ENCODE measurements at regions of chr21 and their contacts with region 1.

Region 1: GRCh38 chr21:44817506-44817880 is 369 bp downstream of the SUMO3 start:
- DNase-seq: peak; percentile 92
- H3K4me3 Mint-ChIP-seq: peak overlapping the region; percentile 66
- H3K27ac Mint-ChIP-seq: no peak overlapping the region
- H3K4me1 Mint-ChIP-seq: peaks cover 11% of the 10 kb centered on the region
- H3K27me3 Mint-ChIP-seq: no peaks in the 10 kb centered on the region

Region 2: DNA sequence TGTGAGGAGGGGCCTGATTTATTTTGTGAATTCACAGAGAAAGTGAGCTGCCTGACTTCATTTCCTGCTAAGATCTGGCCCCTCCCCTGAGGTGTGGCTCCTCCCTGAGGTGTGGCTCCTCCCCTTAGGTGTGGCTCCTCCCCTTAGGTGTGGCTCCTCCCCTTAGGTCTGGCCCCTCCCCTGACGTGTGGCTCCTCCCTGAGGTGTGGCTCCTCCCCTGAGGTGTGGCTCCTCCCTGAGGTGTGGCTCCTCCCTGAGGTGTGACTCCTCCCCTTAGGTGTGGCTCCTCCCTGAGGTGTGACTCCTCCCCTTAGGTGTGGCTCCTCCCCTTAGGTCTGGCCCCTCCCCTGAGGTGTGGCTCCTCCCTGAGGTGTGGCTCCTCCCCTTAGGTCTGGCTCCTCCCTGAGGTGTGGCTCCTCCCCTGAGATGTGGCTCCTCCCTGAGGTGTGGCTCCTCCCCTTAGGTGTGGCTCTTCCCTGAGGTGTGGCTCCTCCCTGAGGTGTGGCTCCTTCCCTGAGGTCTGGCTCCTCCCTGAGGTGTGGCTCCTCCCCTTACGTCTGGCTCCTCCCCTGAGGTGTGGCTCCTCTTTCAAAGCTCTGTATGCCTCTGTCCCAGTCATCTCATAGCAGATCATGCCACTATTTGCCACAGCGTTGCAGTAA is 389.1 kb before region 1 on chr21:
- intact Hi-C with region 1: loop called (anchors 5 kb)
- DNase-seq: peak; percentile 49
- H3K4me3 Mint-ChIP-seq: no peak overlapping the region
- H3K27ac Mint-ChIP-seq: no peak overlapping the region
- H3K4me1 Mint-ChIP-seq: no peaks in the 10 kb centered on the region
- H3K27me3 Mint-ChIP-seq: no peaks in the 10 kb centered on the region

Region 3: GRCh38 chr21:44454747-44455523 is 362.6 kb before region 1 on chr21 and contains the start of gene LRRC3:
- intact Hi-C with region 1: loop called (anchors 1 kb)
- DNase-seq: peak; percentile 67
- H3K4me3 Mint-ChIP-seq: peak within 1 kb of the TSS; percentile 81
- H3K27ac Mint-ChIP-seq: peak within 1 kb of the TSS; percentile 16
- H3K4me1 Mint-ChIP-seq: peaks cover 4% of the 10 kb centered on the region
- H3K27me3 Mint-ChIP-seq: peaks cover 28% of the 10 kb centered on the region
- total RNA-seq, gene LRRC3: 1.8 and 1.9 TPM in 2 replicates

Region 4: GRCh38 chr21:44653656-44654575 is 163.6 kb before region 1 on chr21:
- intact Hi-C with region 1: no loop called
- DNase-seq: no peak
- H3K4me3 Mint-ChIP-seq: peak overlapping the region; percentile 15
- H3K27ac Mint-ChIP-seq: no peak overlapping the region
- H3K4me1 Mint-ChIP-seq: peaks cover 49% of the 10 kb centered on the region
- H3K27me3 Mint-ChIP-seq: no peaks in the 10 kb centered on the region

Region 5: DNA sequence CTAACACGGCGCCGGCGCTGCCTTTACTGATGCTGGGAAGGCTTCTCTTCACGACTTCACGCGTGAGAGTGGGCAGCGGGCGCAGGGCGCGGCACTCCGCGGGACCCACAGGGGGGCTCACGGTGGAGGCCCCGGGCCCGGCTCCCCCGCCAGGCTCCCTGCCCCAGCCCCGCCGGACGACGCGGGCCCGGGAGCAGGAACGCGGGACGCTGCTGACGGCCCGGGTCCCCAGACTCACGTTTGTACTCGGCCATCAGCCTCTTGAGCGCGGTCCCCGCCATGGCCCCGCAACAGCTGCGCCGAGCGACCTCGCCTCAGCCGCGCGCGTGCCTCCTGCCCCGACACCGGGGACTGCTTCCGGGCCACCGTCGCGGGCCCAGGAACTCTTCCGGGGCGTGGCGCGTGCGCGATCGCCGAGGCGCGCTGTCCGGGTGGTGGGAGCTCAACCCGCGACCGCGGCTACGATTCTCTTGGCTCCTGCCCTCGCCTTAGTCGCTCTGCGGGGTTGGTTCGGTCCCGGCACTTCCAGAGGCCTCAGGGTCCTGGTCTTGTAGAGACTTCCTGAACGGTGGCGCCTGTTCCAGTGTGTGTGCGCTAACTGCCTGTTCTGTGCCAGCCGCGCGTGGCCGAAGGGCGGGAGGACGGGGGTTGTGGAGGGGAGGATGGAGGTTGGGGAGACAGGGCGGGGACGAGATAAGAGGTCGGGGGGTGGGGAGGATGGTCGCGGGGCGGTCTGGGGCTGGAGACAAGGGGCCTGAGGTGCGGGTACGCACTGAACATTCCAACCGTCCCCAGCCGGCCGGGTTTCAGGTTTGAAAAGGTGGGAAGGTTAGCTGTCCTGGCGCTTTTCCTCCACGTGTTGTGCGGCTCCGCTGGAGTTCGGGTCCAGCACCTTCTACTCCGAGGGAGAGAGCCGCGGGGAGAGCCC is 15.8 kb before region 1 on chr21 and contains the start of gene UBE2G2:
- intact Hi-C with region 1: loop called (anchors 1 kb)
- DNase-seq: peak; percentile 87
- H3K4me3 Mint-ChIP-seq: peak within 1 kb of the TSS; percentile 99
- H3K27ac Mint-ChIP-seq: peak within 1 kb of the TSS; percentile 94
- H3K4me1 Mint-ChIP-seq: peaks cover 54% of the 10 kb centered on the region
- H3K27me3 Mint-ChIP-seq: no peaks in the 10 kb centered on the region
- total RNA-seq, gene UBE2G2: 137 and 151 TPM in 2 replicates

Region 6: GRCh38 chr21:44845399-44846223 is 28.1 kb after region 1 on chr21:
- intact Hi-C with region 1: loop called (anchors 2 kb)
- DNase-seq: peak; percentile 65
- H3K4me3 Mint-ChIP-seq: peak overlapping the region; percentile 65
- H3K27ac Mint-ChIP-seq: no peak overlapping the region
- H3K4me1 Mint-ChIP-seq: peaks cover 10% of the 10 kb centered on the region
- H3K27me3 Mint-ChIP-seq: peaks cover 5% of the 10 kb centered on the region

Region 7: GRCh38 chr21:45287438-45288391 is 470.2 kb after region 1 on chr21 and contains the start of gene POFUT2:
- intact Hi-C with region 1: loop called (anchors 5 kb)
- DNase-seq: peak; percentile 97
- H3K4me3 Mint-ChIP-seq: peak within 1 kb of the TSS; percentile 84
- H3K27ac Mint-ChIP-seq: peak within 1 kb of the TSS; percentile 86
- H3K4me1 Mint-ChIP-seq: peaks cover 16% of the 10 kb centered on the region
- H3K27me3 Mint-ChIP-seq: peaks cover 12% of the 10 kb centered on the region
- total RNA-seq, gene POFUT2: 14.3 and 17.6 TPM in 2 replicates